Mammary epithelial cell (primary cell): ENCODE measurements at regions of chr7 and their contacts with region 1.

Region 1: DNA sequence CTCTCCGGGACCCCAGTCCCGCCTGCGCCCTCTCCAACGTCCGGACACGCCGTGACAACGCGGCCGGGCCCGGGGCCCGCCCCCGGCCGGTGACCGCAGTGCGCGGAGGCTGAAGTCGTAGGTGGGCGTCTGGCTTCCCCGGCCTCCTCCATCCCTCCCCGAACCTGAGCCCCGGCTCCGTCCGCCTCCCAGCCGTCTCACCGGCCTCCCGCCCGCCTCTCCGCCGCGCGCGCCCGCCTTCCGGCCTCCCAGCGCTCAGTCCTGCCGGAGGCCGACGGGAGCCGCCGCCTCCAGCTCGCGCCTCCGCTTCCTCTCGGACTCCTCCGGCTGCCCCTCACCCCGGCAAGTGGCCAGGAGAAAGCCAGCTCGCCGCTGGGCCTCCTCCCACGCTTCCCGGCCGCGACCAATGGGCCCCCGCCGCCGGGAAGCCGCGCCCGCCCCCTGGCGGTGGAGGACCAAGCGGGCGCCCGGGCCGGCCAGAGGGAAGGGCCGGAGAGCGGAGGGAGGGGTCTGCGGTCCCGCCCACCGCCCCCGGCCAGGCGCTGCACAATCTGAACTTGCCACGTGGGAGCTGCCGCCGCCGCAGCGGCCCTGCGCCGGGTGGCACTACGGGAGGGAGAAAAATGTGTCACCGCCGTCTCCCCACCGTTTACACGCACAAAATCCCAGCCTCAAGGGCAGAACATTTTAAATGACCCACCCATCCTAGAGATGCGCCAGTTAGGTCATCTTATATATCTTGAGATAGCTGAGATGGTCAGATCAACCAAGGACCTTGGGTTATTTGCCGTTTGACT is at the start of gene FAM3C:
- DNase-seq: peak; percentile 90
- H3K4me3 ChIP-seq: peak within 1 kb of the TSS; percentile 80 to 87 (median 84)
- H3K27ac ChIP-seq: peak within 1 kb of the TSS; percentile 75
- H3K4me1 ChIP-seq: peaks cover 16% of the 10 kb centered on the region
- H3K27me3 ChIP-seq: no peaks in the 10 kb centered on the region
- CTCF ChIP-seq: peak; percentile 46 to 76
- total RNA-seq, gene FAM3C: 80.5 to 107 TPM

Region 2: GRCh38 chr7:121372376-121373010 is 23.7 kb before region 1 on chr7:
- CTCF ChIA-PET with region 1: no interaction called
- dilution Hi-C with region 1: no loop called
- in situ Hi-C with region 1: no loop called
- intact Hi-C with region 1: loop called (anchors 2 kb)
- DNase-seq: no peak
- H3K4me3 ChIP-seq: no peak overlapping the region
- H3K27ac ChIP-seq: no peak overlapping the region
- H3K4me1 ChIP-seq: peaks cover 4% of the 10 kb centered on the region
- H3K27me3 ChIP-seq: no peaks in the 10 kb centered on the region
- CTCF ChIP-seq: no peak

Region 3: DNA sequence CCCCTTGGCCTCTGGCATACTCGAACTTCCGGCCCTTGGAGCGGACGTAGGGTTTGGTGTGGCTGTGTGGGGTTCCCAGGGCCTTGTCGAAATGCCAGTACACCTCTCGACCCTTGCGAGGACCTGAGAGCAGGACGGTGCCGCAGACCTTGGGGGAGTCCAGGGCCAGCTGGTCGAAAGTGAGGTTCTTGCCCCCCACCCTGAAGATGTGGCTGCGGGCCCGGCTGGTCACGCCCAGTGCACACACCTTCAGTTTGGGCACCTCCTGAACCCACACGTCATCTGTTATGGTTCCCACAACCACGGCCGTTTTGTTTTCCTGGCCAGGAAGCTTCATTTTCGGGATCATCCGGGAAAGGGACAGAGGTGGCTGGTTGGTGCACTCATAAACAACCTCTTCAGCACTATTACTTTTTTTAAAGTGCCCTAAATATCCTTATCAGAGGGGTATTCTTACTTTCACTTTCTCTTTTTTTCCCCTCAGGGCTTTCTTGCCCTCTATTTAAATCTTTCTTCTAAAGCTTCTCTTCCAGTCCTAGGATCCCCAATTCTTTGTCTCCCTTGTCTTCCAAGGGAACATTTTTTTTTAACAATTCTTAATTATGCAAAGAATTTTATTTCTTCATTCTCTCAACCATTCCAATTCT is 44.8 kb after region 1 on chr7:
- CTCF ChIA-PET with region 1: interaction called, 10 read pairs
- dilution Hi-C with region 1: no loop called
- in situ Hi-C with region 1: no loop called
- intact Hi-C with region 1: loop called (anchors 5 kb)
- DNase-seq: no peak
- H3K4me3 ChIP-seq: no peak overlapping the region
- H3K27ac ChIP-seq: no peak overlapping the region
- H3K4me1 ChIP-seq: peaks cover 13% of the 10 kb centered on the region
- H3K27me3 ChIP-seq: no peaks in the 10 kb centered on the region
- CTCF ChIP-seq: no peak

Region 4: GRCh38 chr7:121480058-121480457 is 83.9 kb after region 1 on chr7:
- CTCF ChIA-PET with region 1: interaction called, 3 read pairs
- dilution Hi-C with region 1: no loop called
- in situ Hi-C with region 1: no loop called
- intact Hi-C with region 1: loop called (anchors 5 kb)
- DNase-seq: peak; percentile 27
- H3K4me3 ChIP-seq: no peak overlapping the region
- H3K27ac ChIP-seq: no peak overlapping the region
- H3K4me1 ChIP-seq: peaks cover 9% of the 10 kb centered on the region
- H3K27me3 ChIP-seq: no peaks in the 10 kb centered on the region
- CTCF ChIP-seq: no peak